ENCODE measurements at regions of chr12 and their contacts with region 1.

Region 1: GRCh38 chr12:57309420-57309819 is 58.4 kb upstream of the STAC3 start:
- DNase-seq: no peak
- H3K4me3 ChIP-seq: no peak overlapping the region
- H3K27ac ChIP-seq: peak overlapping the region in 2 of 4 donors; percentile 29 to 32
- H3K4me1 ChIP-seq: peaks cover 0 to 13% (median 6%) of the 10 kb centered on the region in 4 donors
- H3K27me3 ChIP-seq: no peaks in the 10 kb centered on the region
- CTCF ChIP-seq: no peak
- EP300 ChIP-seq: no peak
- POLR2A ChIP-seq: no peak

Region 2: GRCh38 chr12:57430931-57431720 is 121.7 kb after region 1 on chr12 and contains the start of gene R3HDM2:
- in situ Hi-C with region 1: loop called in 1 of 4 experiments (anchors 25 kb)
- intact Hi-C with region 1: no loop called
- DNase-seq: peak; percentile 97
- H3K4me3 ChIP-seq: peak within 1 kb of the TSS; percentile 75 to 89 (median 78)
- H3K27ac ChIP-seq: peak within 1 kb of the TSS; percentile 94 to 98 (median 96)
- H3K4me1 ChIP-seq: peaks cover 5 to 22% (median 8%) of the 10 kb centered on the region in 4 donors
- H3K27me3 ChIP-seq: no peaks in the 10 kb centered on the region
- CTCF ChIP-seq: no peak
- EP300 ChIP-seq: peak; percentile 22
- POLR2A ChIP-seq: peak; percentile 95
- total RNA-seq, gene R3HDM2: 26.3 to 56.9 (median 33.3) TPM

Region 3: GRCh38 chr12:58557171-58557570 is 1247.8 kb after region 1 on chr12:
- in situ Hi-C with region 1: no loop called
- intact Hi-C with region 1: no loop called
- DNase-seq: no peak
- H3K4me3 ChIP-seq: no peak overlapping the region
- H3K27ac ChIP-seq: no peak overlapping the region
- H3K4me1 ChIP-seq: no peaks in the 10 kb centered on the region
- H3K27me3 ChIP-seq: no peaks in the 10 kb centered on the region
- CTCF ChIP-seq: no peak
- EP300 ChIP-seq: no peak
- POLR2A ChIP-seq: no peak